ENCODE measurements at regions of chr7 and their contacts with region 1.

Region 1: DNA sequence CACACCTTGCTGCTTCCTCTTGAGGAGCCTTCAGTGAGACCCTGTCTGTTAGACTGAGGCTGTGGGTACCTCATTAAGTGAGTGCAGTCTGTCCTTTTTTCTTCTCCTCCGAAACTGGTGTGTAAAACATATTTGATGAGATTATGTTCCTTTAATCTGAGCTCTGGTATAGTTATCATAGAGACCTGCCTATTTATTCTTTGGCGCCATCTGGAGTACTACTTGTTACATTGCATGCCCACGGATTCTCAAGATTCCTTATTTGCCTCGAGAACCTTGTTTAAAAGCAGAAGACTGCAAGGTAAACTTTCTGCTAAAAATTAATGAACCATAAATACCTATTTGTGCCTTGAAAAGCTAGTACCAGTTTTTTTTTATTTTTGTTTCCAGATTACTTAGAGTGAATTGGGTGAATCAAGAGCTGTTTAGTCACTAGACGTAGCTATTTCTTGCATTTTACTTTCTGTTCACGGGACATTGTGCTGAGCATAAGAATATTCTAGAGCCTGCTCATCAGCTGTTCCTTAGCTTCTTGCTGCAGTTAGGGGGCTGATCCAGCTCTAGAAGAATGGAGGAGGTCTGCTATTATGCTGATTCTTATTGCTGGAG is 16.9 kb upstream of the STMP1 start:
- DNase-seq: no peak
- ATAC-seq: peak; percentile 41 to 78

Region 2: DNA sequence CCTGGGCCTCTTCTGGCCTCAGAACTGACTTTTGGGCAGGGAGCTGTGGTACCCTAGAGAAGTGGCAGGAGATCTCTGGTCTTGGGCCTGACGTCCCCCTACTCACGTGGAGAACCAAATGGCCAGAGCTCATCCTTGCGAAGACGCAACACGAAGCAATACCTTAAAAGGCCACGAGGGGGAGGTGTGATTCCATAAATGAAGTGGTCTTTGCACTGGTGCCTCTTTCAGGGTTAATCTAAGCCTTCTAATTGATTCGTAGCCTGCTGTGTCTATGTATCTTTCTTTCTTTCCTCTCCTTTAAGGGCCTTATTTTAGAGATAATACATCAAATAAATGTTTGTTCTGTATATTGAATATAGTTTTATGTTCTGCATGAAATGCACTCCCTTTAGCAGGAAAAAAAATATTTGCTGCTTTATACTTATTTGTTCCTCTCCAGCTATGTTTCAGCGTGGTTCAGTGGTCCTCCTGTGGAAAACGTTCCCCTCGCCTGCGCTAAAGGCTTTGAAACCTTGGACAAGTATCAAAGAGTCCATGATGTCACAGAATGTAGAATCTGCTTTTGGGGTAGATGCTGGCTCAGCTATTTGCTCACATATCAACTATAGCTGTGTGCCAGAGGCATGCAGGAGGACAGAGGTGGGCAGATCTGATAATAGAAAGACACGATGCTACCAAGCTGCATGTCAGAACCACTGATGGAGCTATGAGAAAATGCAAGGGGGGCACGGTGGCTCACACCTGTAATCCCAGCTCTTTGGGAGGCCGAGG is 370.7 kb before region 1 on chr7:
- intact Hi-C with region 1: loop called (anchors 5 kb)
- DNase-seq: peak; percentile 62
- ATAC-seq: peak; percentile 70

Region 3: GRCh38 chr7:135855846-135856245 is 210.4 kb after region 1 on chr7:
- intact Hi-C with region 1: no loop called
- DNase-seq: no peak
- ATAC-seq: no peak